HEK293T (cell line): ENCODE measurements at regions of chr1 and their contacts with region 1.

Region 1: DNA sequence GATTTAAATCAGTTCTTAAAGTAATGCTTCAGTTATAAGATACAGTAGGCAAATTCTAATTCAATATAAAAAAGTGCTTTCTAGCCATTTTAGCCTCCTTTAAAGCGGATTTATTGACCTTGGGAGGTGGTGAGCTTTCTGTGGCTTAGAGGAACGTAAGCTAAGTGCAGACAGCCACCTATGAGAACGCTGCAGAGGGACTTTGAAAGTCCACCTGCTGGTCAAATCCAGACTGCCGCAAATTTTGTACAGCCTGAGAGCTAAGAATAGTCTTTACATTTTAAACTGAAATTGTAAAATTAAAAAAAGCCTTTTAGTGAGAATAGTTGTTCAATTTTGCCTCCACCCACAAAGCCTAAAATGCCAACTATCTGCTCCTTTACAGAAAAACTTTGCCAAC is 67.0 kb upstream of the SSX2IP start:
- DNase-seq: peak; percentile 45

Region 2: DNA sequence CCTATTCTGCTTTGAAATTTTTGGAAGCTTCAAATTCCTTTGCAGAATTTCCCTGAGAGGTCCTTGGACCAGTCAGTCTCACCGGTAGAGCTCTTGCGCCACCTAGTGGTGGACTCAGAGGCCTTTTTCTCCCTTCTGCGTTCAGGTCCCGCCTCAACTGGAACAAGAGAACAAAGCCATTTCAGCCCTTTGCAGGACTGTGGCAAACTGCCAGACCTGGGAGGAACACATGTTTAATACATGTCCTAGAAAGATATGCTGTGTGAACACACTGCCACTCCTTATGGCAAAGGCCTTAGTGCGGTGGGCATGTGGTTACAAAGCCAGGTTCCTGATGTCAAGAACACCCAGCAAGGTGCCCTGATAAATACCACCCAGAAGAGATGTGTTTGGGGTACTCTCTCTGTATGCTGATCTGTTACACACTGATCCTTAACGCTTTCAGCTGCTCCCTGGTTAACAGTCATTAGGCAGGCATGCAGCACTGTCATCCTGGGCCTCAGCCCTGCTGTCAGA is 15.2 kb after region 1 on chr1:
- CTCF ChIA-PET with region 1: interaction called, 10 read pairs
- POLR2A ChIA-PET with region 1: no interaction called
- DNase-seq: peak; percentile 87